ENCODE measurements at regions of chr5 and their contacts with region 1.

Region 1: DNA sequence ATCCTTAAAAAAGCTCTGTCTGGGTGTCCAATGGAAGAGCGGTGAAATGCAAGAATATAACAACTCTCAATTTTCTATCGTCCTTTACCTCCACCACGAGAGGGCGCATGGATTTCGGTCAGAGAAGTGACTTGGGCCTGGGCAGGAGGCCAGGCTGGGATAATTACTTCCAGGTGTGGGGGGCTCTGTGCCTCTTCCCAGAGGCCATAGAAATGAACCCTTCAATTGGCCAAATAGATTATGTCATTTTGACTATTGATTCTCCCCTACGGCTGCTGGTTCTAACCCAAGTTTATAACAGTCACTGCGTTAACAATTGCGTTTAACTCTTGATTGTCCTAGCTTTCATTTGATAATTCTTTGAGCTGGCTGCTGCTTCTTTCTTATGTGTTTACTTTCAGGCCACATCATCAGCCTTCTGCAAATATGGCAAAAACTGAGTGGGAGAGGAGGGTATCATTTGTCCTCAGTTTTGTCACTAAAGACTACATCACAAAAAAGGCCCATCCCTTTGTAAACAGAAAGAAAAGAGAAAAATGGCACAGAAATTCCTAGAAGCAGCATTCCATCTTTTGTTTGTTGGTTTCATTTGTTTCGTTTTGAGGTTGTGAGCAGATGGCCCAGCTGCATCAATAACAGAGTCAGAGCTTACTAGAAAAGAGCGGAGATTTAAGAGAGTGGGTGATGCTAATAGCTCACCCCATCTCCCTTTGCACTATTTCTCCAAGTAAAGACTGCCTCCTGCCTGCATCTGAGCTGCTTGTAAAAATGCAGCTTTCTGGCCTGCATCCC is 45.4 kb upstream of the ZFR start:
- DNase-seq: peak; percentile 86
- ATAC-seq: peak; percentile 84

Region 2: DNA sequence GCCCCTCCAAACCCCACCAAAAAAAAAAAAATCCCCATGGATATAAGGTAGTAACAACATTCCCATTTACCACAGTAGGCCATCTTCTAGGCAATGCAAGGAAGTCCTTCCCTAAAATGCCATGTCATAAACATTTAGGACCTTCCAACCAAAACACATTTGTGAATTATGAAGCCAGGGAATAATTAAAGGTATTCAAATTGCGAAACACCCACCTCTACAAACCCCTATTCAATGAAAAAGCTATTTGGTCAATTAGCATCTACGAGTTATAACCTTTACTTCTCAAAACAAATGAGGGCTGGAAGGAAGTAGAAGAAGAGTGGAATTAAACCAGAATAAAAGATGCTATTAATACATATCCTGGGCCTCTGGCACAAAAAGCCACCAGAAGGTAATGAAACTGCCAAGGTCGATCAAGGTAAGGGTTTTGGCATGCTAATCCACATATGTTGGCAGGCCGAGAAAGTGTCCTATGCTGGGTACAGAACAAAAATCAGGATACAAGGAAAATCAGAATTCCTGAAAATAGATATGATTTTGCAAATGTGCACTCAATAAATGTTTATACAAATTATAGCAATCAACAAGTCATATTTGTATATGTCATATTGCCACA is 224.9 kb before region 1 on chr5:
- intact Hi-C with region 1: no loop called
- DNase-seq: no peak
- ATAC-seq: no peak

Region 3: GRCh38 chr5:32589942-32590869 is 100.2 kb after region 1 on chr5:
- intact Hi-C with region 1: loop called (anchors 2 to 5 kb)
- DNase-seq: no peak
- ATAC-seq: no peak

Region 4: GRCh38 chr5:32613050-32613672 is 123.2 kb after region 1 on chr5:
- intact Hi-C with region 1: loop called (anchors 2 to 5 kb)
- DNase-seq: peak; percentile 80
- ATAC-seq: peak; percentile 71 to 74